ENCODE measurements at regions of chr19 and their contacts with region 1.

Region 1: GRCh38 chr19:3494051-3494450 is 6.4 kb downstream of the DOHH start:
- DNase-seq: no peak
- H3K4me3 ChIP-seq: no peak overlapping the region
- H3K27ac ChIP-seq: no peak overlapping the region
- H3K4me1 ChIP-seq: no peaks in the 10 kb centered on the region
- H3K27me3 ChIP-seq: no peaks in the 10 kb centered on the region
- CTCF ChIP-seq: no peak
- POLR2A ChIP-seq: no peak

Region 2: GRCh38 chr19:3479177-3479833 is 14.7 kb before region 1 on chr19:
- CTCF ChIA-PET with region 1: interaction called, 20 read pairs
- POLR2A ChIA-PET with region 1: no interaction called
- dilution Hi-C with region 1: no loop called
- intact Hi-C with region 1: no loop called
- DNase-seq: no peak
- H3K4me3 ChIP-seq: no peak overlapping the region
- H3K27ac ChIP-seq: no peak overlapping the region
- H3K4me1 ChIP-seq: no peaks in the 10 kb centered on the region
- H3K27me3 ChIP-seq: peaks cover 3 to 11% of the 10 kb centered on the region in 2 experiments
- CTCF ChIP-seq: no peak
- POLR2A ChIP-seq: no peak

Region 3: GRCh38 chr19:3721131-3721886 is 227.3 kb after region 1 on chr19:
- CTCF ChIA-PET with region 1: no interaction called
- POLR2A ChIA-PET with region 1: no interaction called
- dilution Hi-C with region 1: no loop called
- intact Hi-C with region 1: no loop called
- DNase-seq: peak; percentile 61
- H3K4me3 ChIP-seq: no peak overlapping the region
- H3K27ac ChIP-seq: no peak overlapping the region
- H3K4me1 ChIP-seq: no peaks in the 10 kb centered on the region
- H3K27me3 ChIP-seq: peaks cover 20 to 27% of the 10 kb centered on the region in 2 experiments
- CTCF ChIP-seq: no peak
- POLR2A ChIP-seq: no peak

Measured in endothelial cell of umbilical vein (primary cell).